Activated CD8-positive, alpha-beta T cell treated with anti-CD3 and anti-CD28 coated beads, Interleukin-2, amount 10 ng/mL, durations not matched to agents 7 days and 5 days (primary cell): ENCODE measurements at regions of chr1 and their contacts with region 1.

Region 1: GRCh38 chr1:109984456-109985275 is at the start of gene AHCYL1:
- DNase-seq: peak; percentile 100
- ATAC-seq: peak; percentile 98
- H3K4me3 Mint-ChIP-seq: peak within 1 kb of the TSS; percentile 100
- H3K27ac Mint-ChIP-seq: peak within 1 kb of the TSS; percentile 97
- H3K4me1 Mint-ChIP-seq: peaks cover 38% of the 10 kb centered on the region
- H3K27me3 Mint-ChIP-seq: no peaks in the 10 kb centered on the region
- total RNA-seq, gene AHCYL1: 55.0 to 64.5 TPM

Region 2: DNA sequence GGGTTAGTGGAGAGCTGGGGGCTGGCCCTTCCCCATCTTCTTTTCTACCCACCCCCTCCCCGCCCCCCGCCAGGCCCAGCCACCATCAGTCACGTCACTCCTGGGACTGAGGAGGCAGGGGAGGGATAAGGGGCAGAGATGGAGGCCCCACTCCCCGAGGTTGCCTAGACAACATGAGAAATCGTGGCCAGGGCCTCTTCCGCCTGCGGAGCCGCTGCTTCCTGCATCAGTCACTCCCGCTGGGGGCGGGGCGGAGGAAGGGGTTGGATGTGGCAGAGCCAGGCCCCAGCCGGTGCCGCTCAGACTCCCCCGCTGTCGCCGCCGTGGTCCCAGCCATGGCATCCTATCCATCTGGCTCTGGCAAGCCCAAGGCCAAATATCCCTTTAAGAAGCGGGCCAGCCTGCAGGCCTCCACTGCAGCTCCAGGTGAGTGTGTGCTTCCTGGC is 363.8 kb before region 1 on chr1:
- CTCF ChIA-PET with region 1: interaction called, 10 read pairs
- POLR2A ChIA-PET with region 1: interaction called, 5 read pairs
- DNase-seq: peak; percentile 99
- ATAC-seq: peak; percentile 83
- H3K4me3 Mint-ChIP-seq: peak overlapping the region; percentile 95
- H3K27ac Mint-ChIP-seq: peak overlapping the region; percentile 96
- H3K4me1 Mint-ChIP-seq: peaks cover 74% of the 10 kb centered on the region
- H3K27me3 Mint-ChIP-seq: no peaks in the 10 kb centered on the region

Region 3: DNA sequence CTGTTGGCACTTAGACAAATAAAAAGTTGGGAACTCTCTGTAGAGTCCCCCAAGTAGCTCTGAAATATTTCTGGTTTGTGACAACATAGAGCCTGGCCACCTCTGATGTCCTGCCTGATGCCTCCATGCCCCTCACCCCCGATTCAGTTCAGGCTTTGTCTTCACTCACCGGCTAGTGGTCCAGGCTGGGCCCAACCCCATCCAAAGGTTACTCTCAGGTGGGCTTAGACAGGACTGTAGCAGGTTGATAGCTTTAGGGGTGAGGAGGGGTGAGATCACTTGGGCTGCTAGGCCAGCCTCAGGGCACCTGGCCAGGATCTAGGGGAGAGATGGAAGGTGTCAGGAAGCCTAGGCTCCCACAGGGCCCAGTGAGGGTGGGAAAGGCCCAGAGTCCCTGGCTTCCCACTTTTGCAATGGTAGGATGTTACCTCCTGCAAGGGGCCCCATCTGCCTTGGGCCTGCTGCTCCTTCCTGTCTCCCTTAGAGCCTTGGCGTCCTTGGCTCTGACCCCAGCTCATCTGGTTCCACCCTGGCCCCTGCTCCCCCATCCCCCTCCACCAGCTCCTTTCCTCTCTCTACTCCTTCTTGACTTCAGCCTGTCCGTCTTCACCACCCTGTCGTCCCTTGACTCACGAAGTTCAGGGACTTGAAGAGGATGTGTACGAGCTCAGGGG is 227.7 kb before region 1 on chr1:
- CTCF ChIA-PET with region 1: interaction called, 16 read pairs
- POLR2A ChIA-PET with region 1: no interaction called
- DNase-seq: no peak
- ATAC-seq: no peak
- H3K4me3 Mint-ChIP-seq: no peak overlapping the region
- H3K27ac Mint-ChIP-seq: no peak overlapping the region
- H3K4me1 Mint-ChIP-seq: no peaks in the 10 kb centered on the region
- H3K27me3 Mint-ChIP-seq: peaks cover 6% of the 10 kb centered on the region

Region 4: GRCh38 chr1:109895720-109896504 is 88.8 kb before region 1 on chr1:
- CTCF ChIA-PET with region 1: interaction called, 18 read pairs
- POLR2A ChIA-PET with region 1: no interaction called
- DNase-seq: peak; percentile 44
- ATAC-seq: peak; percentile 68
- H3K4me3 Mint-ChIP-seq: no peak overlapping the region
- H3K27ac Mint-ChIP-seq: no peak overlapping the region
- H3K4me1 Mint-ChIP-seq: peaks cover 20% of the 10 kb centered on the region
- H3K27me3 Mint-ChIP-seq: no peaks in the 10 kb centered on the region

Region 5: DNA sequence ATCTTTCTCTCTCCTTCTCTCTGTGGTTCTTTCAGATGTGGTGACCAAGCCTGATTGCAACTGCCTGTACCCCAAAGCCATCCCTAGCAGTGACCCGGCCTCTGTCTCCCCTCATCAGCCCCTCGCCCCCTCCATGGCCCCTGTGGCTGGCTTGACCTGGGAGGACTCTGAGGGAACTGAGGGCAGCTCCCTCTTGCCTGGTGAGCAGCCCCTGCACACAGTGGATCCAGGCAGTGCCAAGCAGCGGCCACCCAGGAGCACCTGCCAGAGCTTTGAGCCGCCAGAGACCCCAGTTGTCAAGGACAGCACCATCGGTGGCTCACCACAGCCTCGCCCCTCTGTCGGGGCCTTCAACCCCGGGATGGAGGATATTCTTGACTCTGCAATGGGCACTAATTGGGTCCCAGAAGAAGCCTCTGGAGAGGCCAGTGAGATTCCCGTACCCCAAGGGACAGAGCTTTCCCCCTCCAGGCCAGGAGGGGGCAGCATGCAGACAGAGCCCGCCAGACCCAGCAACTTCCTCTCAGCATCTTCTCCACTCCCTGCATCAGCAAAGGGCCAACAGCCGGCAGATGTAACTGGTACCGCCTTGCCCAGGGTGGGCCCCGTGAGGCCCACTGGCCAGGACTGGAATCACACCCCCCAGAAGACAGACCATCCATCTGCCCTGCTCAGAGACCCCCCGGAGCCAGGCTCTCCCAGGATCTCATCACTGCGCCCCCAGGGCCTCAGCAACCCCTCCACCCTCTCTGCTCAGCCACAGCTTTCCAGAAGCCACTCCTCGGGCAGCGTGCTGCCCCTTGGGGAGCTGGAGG is 61.3 kb before region 1 on chr1:
- CTCF ChIA-PET with region 1: interaction called, 44 read pairs
- POLR2A ChIA-PET with region 1: interaction called, 3 read pairs
- DNase-seq: no peak
- ATAC-seq: peak; percentile 14
- H3K4me3 Mint-ChIP-seq: no peak overlapping the region
- H3K27ac Mint-ChIP-seq: peak overlapping the region; percentile 50
- H3K4me1 Mint-ChIP-seq: peaks cover 29% of the 10 kb centered on the region
- H3K27me3 Mint-ChIP-seq: no peaks in the 10 kb centered on the region

Region 6: GRCh38 chr1:110011527-110012041 is 26.9 kb after region 1 on chr1:
- CTCF ChIA-PET with region 1: interaction called, 121 read pairs
- POLR2A ChIA-PET with region 1: interaction called, 13 read pairs
- DNase-seq: peak; percentile 58
- ATAC-seq: peak; percentile 95
- H3K4me3 Mint-ChIP-seq: no peak overlapping the region
- H3K27ac Mint-ChIP-seq: peak overlapping the region; percentile 19
- H3K4me1 Mint-ChIP-seq: peaks cover 3% of the 10 kb centered on the region
- H3K27me3 Mint-ChIP-seq: no peaks in the 10 kb centered on the region